Ascending aorta (tissue), 2 donors: ENCODE measurements at regions of chr17 and their contacts with region 1.

Region 1: GRCh38 chr17:57597531-57598453 is 147.3 kb downstream of the CCDC182 start:
- DNase-seq: peak in 1 of 2 donors; percentile 86
- H3K4me3 ChIP-seq: no peak overlapping the region
- H3K27ac ChIP-seq: peak overlapping the region; percentile 40 to 57
- H3K4me1 ChIP-seq: peaks cover 0 to 14% of the 10 kb centered on the region in 2 donors
- H3K27me3 ChIP-seq: no peaks in the 10 kb centered on the region
- CTCF ChIP-seq: peak; percentile 56 to 84 (median 75)

Region 2: GRCh38 chr17:57121338-57122042 is 476.3 kb before region 1 on chr17:
- intact Hi-C with region 1: loop called (anchors 10 kb)
- DNase-seq: no peak
- H3K4me3 ChIP-seq: no peak overlapping the region
- H3K27ac ChIP-seq: no peak overlapping the region
- H3K4me1 ChIP-seq: no peaks in the 10 kb centered on the region
- H3K27me3 ChIP-seq: no peaks in the 10 kb centered on the region
- CTCF ChIP-seq: peak in 2 of 3 experiments; percentile 30 to 48

Region 3: GRCh38 chr17:57557834-57558681 is 39.7 kb before region 1 on chr17:
- intact Hi-C with region 1: loop called (anchors 2 kb)
- DNase-seq: peak in 1 of 2 donors; percentile 78
- H3K4me3 ChIP-seq: peak overlapping the region in 1 of 2 donors; percentile 30
- H3K27ac ChIP-seq: peak overlapping the region in 1 of 2 donors; percentile 26
- H3K4me1 ChIP-seq: peaks cover 0 to 14% of the 10 kb centered on the region in 2 donors
- H3K27me3 ChIP-seq: no peaks in the 10 kb centered on the region
- CTCF ChIP-seq: no peak

Region 4: DNA sequence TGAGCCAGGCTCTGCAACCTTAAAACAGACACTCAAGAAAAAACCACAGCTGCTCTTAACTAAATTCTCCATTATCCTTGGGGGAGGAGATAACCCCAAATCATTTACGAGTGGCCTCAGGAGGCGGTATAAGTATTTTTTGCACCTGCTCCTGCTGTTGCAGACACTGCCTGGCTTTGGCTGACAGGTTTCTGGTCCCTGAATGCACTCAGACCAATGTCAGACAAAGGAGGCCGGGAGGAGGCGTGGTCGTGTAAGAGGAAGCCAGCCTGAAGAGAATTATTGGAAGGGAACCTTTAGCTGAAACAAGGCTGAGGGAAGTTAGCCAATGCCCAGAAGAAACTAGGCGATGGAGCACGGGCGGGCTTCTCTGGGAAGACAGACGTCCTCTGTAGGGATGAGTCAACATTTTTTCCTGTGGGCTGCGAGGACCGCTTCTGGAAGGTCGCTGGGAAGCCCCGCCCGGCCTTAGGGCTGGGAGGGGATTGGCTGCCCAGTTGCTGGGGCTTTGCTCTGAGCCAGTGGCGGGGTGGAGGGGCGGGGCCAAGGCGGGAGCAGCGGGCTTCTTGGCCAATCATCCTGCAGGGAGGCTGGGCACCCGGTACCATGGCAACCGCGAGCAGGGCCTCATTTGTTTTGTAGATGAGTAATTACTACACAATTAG is 65.0 kb after region 1 on chr17:
- intact Hi-C with region 1: loop called (anchors 2 kb)
- DNase-seq: peak; percentile 90 to 98
- H3K4me3 ChIP-seq: peak overlapping the region; percentile 44 to 50
- H3K27ac ChIP-seq: peak overlapping the region; percentile 68 to 73
- H3K4me1 ChIP-seq: peaks cover 0 to 7% of the 10 kb centered on the region in 2 donors
- H3K27me3 ChIP-seq: no peaks in the 10 kb centered on the region
- CTCF ChIP-seq: peak in 1 of 3 experiments; percentile 11

Region 5: GRCh38 chr17:57671667-57672632 is 74.2 kb after region 1 on chr17:
- intact Hi-C with region 1: loop called (anchors 2 kb)
- DNase-seq: peak in 1 of 2 donors; percentile 80
- H3K4me3 ChIP-seq: no peak overlapping the region
- H3K27ac ChIP-seq: no peak overlapping the region
- H3K4me1 ChIP-seq: peaks cover 0 to 4% of the 10 kb centered on the region in 2 donors
- H3K27me3 ChIP-seq: no peaks in the 10 kb centered on the region
- CTCF ChIP-seq: peak; percentile 86 to 96 (median 95)

Region 6: GRCh38 chr17:57833179-57833939 is 235.6 kb after region 1 on chr17:
- intact Hi-C with region 1: loop called (anchors 5 kb)
- DNase-seq: peak in 1 of 2 donors; percentile 85
- H3K4me3 ChIP-seq: peak overlapping the region; percentile 51 to 60
- H3K27ac ChIP-seq: peak overlapping the region; percentile 83 to 88
- H3K4me1 ChIP-seq: peaks cover 10 to 19% of the 10 kb centered on the region in 2 donors
- H3K27me3 ChIP-seq: no peaks in the 10 kb centered on the region
- CTCF ChIP-seq: peak; percentile 86 to 93 (median 92)